ENCODE measurements at regions of chr22 and their contacts with region 1.

Region 1: DNA sequence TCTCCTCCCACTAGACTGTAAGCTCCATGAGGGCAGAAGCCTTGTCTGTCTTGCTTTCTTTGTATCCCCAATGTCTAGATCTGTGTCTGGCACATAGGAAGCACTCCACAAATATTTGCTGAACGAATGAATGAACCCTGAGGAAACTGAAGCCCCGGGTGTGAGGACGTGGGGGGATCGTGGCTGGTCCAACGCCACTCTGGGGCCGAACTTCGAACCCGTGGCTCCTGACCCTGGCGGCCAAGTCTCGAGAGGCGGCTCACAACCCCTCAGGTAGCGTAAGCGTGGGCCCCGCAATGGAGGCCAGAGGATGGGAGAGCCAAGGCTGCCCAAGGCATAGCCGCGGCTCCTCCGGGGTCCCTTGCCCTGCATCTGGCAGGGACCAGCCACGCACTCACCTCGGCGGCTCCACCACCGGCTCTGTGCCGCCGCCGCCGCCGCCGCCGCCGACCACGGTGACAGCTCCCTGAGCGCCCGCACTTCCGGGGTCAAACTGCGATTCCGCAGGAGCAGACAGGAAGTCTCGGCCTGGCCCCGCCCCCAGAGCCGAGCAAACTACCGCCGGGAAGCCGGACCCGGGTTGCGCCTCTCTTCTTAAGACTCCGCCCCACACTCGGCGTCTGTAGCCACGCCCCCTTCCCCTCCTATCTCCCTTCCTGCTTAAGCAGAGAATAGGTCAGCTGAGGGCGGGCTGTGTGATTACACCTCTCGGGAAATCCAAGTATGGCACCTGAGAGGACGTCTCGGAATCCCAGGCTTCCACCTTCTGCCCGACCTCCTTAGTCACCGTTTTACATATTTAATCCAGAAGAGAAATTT is at the start of gene ASCC2:
- DNase-seq: peak; percentile 96 to 99 (median 98)
- ATAC-seq: peak; percentile 96 to 97
- H3K4me3 Mint-ChIP-seq: peak within 1 kb of the TSS; percentile 88 to 97 (median 93)
- H3K27ac Mint-ChIP-seq: peak within 1 kb of the TSS; percentile 91 to 99 (median 96)
- H3K4me1 Mint-ChIP-seq: peaks cover 20 to 49% (median 41%) of the 10 kb centered on the region in 4 donors
- H3K27me3 Mint-ChIP-seq: no peaks in the 10 kb centered on the region
- polyA plus RNA-seq, gene ASCC2: 41.2 to 72.7 (median 55.0) TPM

Region 2: GRCh38 chr22:29972121-29972520 is 134.1 kb after region 1 on chr22:
- POLR2A ChIA-PET with region 1: interaction called, 12 read pairs
- DNase-seq: no peak
- ATAC-seq: no peak
- H3K4me3 Mint-ChIP-seq: no peak overlapping the region
- H3K27ac Mint-ChIP-seq: peak overlapping the region in 1 of 10 donors; percentile 28
- H3K4me1 Mint-ChIP-seq: peaks cover 4 to 16% (median 10%) of the 10 kb centered on the region in 4 donors
- H3K27me3 Mint-ChIP-seq: no peaks in the 10 kb centered on the region